Naive thymus-derived CD4-positive, alpha-beta T cell (primary cell): ENCODE measurements at regions of chr19 and their contacts with region 1.

Region 1: DNA sequence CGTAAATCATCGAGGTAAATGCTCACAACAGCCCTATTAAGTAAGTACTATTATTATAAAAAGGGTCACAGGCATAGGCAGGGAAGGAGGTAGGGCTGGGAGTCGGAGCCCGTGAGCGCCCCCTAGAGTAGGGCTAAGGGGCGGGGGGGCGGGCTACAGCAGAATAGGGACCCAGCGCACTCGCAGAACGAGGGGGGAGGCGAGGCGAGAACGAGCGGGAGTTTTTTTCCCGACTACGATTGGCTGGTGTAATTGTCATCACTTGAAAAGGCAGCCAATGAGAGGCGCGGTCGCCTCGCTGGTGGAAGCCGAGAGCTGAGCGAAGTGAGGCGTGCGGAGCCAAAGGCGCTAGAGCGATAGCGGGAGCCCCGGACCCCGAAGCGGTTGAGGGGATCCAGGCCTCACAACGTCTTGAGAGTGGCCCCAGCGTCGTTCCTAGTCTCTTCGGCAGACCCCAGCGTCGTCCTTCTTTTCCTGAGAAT is 24.2 kb downstream of the KEAP1 start:
- DNase-seq: peak; percentile 67 to 94 (median 90)
- ATAC-seq: peak; percentile 98
- H3K4me3 ChIP-seq: peak overlapping the region; percentile 58
- H3K4me3 Mint-ChIP-seq: peak overlapping the region in 9 of 10 donors; percentile 64 to 81 (median 72)
- H3K27ac ChIP-seq: peak overlapping the region; percentile 53
- H3K27ac Mint-ChIP-seq: peak overlapping the region in 8 of 9 donors; percentile 28 to 90 (median 83)
- H3K4me1 ChIP-seq: peaks cover 7 to 11% of the 10 kb centered on the region in 2 donors
- H3K4me1 Mint-ChIP-seq: peaks cover 7 to 32% (median 15%) of the 10 kb centered on the region in 7 donors
- H3K27me3 ChIP-seq: no peaks in the 10 kb centered on the region
- H3K27me3 Mint-ChIP-seq: no peaks in the 10 kb centered on the region

Region 2: DNA sequence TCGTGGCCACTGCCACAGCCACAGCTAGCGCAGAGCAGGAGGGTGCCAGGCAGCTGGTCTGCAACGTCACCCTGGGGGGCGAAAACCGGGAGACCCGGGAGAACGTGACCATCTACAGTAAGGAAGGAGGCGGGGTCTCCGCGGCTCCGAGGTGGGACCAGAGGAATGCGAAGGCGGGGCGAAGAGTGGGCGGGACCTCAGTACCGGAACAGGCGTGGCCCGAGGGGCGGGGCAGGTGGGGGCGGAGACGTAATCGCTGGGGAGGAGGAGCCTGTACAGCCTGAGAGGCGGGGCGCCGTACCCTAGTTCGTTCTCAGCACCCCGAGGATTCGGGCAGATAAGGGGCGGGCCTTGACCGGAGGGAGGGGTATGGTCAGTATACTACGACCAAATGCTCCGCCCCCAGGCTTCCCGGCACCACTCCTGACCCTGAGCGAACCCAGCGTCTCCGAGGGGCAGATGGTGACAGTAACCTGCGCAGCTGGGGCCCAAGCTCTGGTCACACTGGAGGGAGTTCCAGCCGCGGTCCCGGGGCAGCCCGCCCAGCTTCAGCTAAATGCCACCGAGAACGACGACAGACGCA is 186.6 kb before region 1 on chr19:
- CTCF ChIA-PET with region 1: no interaction called
- POLR2A ChIA-PET with region 1: no interaction called
- intact Hi-C with region 1: loop called in 1 of 2 experiments (anchors 5 kb)
- DNase-seq: peak in 8 of 9 donors; percentile 49 to 85 (median 54)
- ATAC-seq: peak; percentile 74
- H3K4me3 ChIP-seq: peak overlapping the region; percentile 54
- H3K4me3 Mint-ChIP-seq: peak overlapping the region; percentile 70 to 87 (median 80)
- H3K27ac ChIP-seq: no peak overlapping the region
- H3K27ac Mint-ChIP-seq: peak overlapping the region in 4 of 9 donors; percentile 34 to 88 (median 68)
- H3K4me1 ChIP-seq: peaks cover 62 to 66% of the 10 kb centered on the region in 2 donors
- H3K4me1 Mint-ChIP-seq: peaks cover 44 to 71% (median 60%) of the 10 kb centered on the region in 7 donors
- H3K27me3 ChIP-seq: peaks cover 8 to 55% of the 10 kb centered on the region in 2 donors
- H3K27me3 Mint-ChIP-seq: peaks cover 43 to 81% (median 52%) of the 10 kb centered on the region in 5 donors

Region 3: DNA sequence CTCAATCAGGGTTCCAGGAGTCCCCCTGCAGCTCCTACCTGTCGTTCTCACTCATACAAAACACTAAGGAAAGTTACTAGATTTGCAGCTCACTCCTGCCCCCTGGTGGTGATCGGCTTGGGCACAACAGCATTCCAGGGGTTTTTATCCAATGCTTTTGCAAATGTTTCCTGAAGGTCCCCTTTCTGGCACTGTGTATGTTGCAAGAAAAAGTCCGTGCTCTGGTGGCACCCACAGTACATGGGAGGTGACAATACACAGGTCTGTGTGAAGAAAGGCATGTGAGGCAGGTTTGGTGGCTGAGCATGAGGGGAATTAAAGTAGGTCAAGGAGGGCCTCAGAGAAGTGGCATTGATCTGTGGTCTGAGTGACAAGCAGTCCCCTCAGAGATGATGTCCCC is 90.0 kb before region 1 on chr19:
- CTCF ChIA-PET with region 1: no interaction called
- POLR2A ChIA-PET with region 1: no interaction called
- intact Hi-C with region 1: no loop called
- DNase-seq: peak; percentile 62 to 82 (median 74)
- ATAC-seq: peak; percentile 77
- H3K4me3 ChIP-seq: no peak overlapping the region
- H3K4me3 Mint-ChIP-seq: no peak overlapping the region
- H3K27ac ChIP-seq: no peak overlapping the region
- H3K27ac Mint-ChIP-seq: peak overlapping the region in 7 of 9 donors; percentile 7 to 56 (median 24)
- H3K4me1 ChIP-seq: no peaks in the 10 kb centered on the region
- H3K4me1 Mint-ChIP-seq: peaks cover 0 to 8% (median 4%) of the 10 kb centered on the region in 7 donors
- H3K27me3 ChIP-seq: no peaks in the 10 kb centered on the region
- H3K27me3 Mint-ChIP-seq: no peaks in the 10 kb centered on the region

Region 4: GRCh38 chr19:10431943-10432735 is 46.8 kb before region 1 on chr19:
- CTCF ChIA-PET with region 1: no interaction called
- POLR2A ChIA-PET with region 1: no interaction called
- intact Hi-C with region 1: loop called in 1 of 2 experiments (anchors 5 kb)
- DNase-seq: peak in 8 of 9 donors; percentile 44 to 64 (median 54)
- ATAC-seq: peak; percentile 58
- H3K4me3 ChIP-seq: peak overlapping the region; percentile 50
- H3K4me3 Mint-ChIP-seq: peak overlapping the region; percentile 82 to 94 (median 88)
- H3K27ac ChIP-seq: peak overlapping the region; percentile 46
- H3K27ac Mint-ChIP-seq: peak overlapping the region in 7 of 9 donors; percentile 26 to 95 (median 82)
- H3K4me1 ChIP-seq: peaks cover 19 to 33% of the 10 kb centered on the region in 2 donors
- H3K4me1 Mint-ChIP-seq: peaks cover 22 to 69% (median 33%) of the 10 kb centered on the region in 7 donors
- H3K27me3 ChIP-seq: peaks cover 0 to 9% of the 10 kb centered on the region in 2 donors
- H3K27me3 Mint-ChIP-seq: peaks cover 22 to 38% (median 31%) of the 10 kb centered on the region in 5 donors

Region 5: GRCh38 chr19:10461047-10461790 is 17.7 kb before region 1 on chr19:
- CTCF ChIA-PET with region 1: no interaction called
- POLR2A ChIA-PET with region 1: no interaction called
- intact Hi-C with region 1: no loop called
- DNase-seq: peak; percentile 67 to 95 (median 79)
- ATAC-seq: peak; percentile 94
- H3K4me3 ChIP-seq: peak overlapping the region; percentile 41
- H3K4me3 Mint-ChIP-seq: peak overlapping the region; percentile 20 to 79 (median 70)
- H3K27ac ChIP-seq: peak overlapping the region; percentile 31
- H3K27ac Mint-ChIP-seq: peak overlapping the region in 1 of 9 donors; percentile 41
- H3K4me1 ChIP-seq: peaks cover 3 to 5% of the 10 kb centered on the region in 2 donors
- H3K4me1 Mint-ChIP-seq: peaks cover 0 to 11% (median 6%) of the 10 kb centered on the region in 7 donors
- H3K27me3 ChIP-seq: no peaks in the 10 kb centered on the region
- H3K27me3 Mint-ChIP-seq: no peaks in the 10 kb centered on the region

Region 6: GRCh38 chr19:10491472-10492047 is 12.6 kb after region 1 on chr19:
- CTCF ChIA-PET with region 1: interaction called, 10 read pairs
- POLR2A ChIA-PET with region 1: no interaction called
- intact Hi-C with region 1: no loop called
- DNase-seq: no peak
- ATAC-seq: no peak
- H3K4me3 ChIP-seq: no peak overlapping the region
- H3K4me3 Mint-ChIP-seq: no peak overlapping the region
- H3K27ac ChIP-seq: no peak overlapping the region
- H3K27ac Mint-ChIP-seq: peak overlapping the region in 1 of 9 donors; percentile 43
- H3K4me1 ChIP-seq: no peaks in the 10 kb centered on the region
- H3K4me1 Mint-ChIP-seq: peaks cover 2 to 15% (median 7%) of the 10 kb centered on the region in 7 donors
- H3K27me3 ChIP-seq: no peaks in the 10 kb centered on the region
- H3K27me3 Mint-ChIP-seq: no peaks in the 10 kb centered on the region

Region 7: DNA sequence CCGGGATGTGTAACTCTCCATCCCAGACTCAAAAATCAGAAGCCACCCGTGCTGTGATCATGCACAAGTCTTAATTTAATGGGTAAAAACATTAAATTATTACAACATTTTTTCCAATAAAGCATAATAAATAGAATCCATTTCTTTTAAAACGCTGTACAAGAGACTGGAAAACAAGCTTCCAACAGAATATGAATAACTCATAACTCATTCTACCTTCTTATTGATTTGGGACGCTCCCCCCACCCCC is 87.4 kb after region 1 on chr19:
- CTCF ChIA-PET with region 1: no interaction called
- POLR2A ChIA-PET with region 1: no interaction called
- intact Hi-C with region 1: no loop called
- DNase-seq: no peak
- ATAC-seq: no peak
- H3K4me3 ChIP-seq: peak overlapping the region; percentile 84
- H3K4me3 Mint-ChIP-seq: peak overlapping the region; percentile 92 to 100 (median 97)
- H3K27ac ChIP-seq: peak overlapping the region; percentile 92
- H3K27ac Mint-ChIP-seq: peak overlapping the region; percentile 94 to 99 (median 96)
- H3K4me1 ChIP-seq: peaks cover 26 to 28% of the 10 kb centered on the region in 2 donors
- H3K4me1 Mint-ChIP-seq: peaks cover 28 to 54% (median 44%) of the 10 kb centered on the region in 7 donors
- H3K27me3 ChIP-seq: no peaks in the 10 kb centered on the region
- H3K27me3 Mint-ChIP-seq: peaks cover 0 to 5% (median 0%) of the 10 kb centered on the region in 5 donors

Region 8: GRCh38 chr19:10695401-10696398 is 216.8 kb after region 1 on chr19:
- CTCF ChIA-PET with region 1: interaction called, 3 read pairs
- POLR2A ChIA-PET with region 1: no interaction called
- intact Hi-C with region 1: loop called (anchors 2 to 10 kb)
- DNase-seq: peak; percentile 79 to 90 (median 85)
- ATAC-seq: peak; percentile 99
- H3K4me3 ChIP-seq: peak overlapping the region; percentile 36
- H3K4me3 Mint-ChIP-seq: peak overlapping the region; percentile 81 to 89 (median 86)
- H3K27ac ChIP-seq: no peak overlapping the region
- H3K27ac Mint-ChIP-seq: peak overlapping the region in 8 of 9 donors; percentile 9 to 88 (median 56)
- H3K4me1 ChIP-seq: peaks cover 4 to 10% of the 10 kb centered on the region in 2 donors
- H3K4me1 Mint-ChIP-seq: peaks cover 12 to 25% (median 21%) of the 10 kb centered on the region in 7 donors
- H3K27me3 ChIP-seq: no peaks in the 10 kb centered on the region
- H3K27me3 Mint-ChIP-seq: peaks cover 0 to 11% (median 0%) of the 10 kb centered on the region in 5 donors

Region 9: DNA sequence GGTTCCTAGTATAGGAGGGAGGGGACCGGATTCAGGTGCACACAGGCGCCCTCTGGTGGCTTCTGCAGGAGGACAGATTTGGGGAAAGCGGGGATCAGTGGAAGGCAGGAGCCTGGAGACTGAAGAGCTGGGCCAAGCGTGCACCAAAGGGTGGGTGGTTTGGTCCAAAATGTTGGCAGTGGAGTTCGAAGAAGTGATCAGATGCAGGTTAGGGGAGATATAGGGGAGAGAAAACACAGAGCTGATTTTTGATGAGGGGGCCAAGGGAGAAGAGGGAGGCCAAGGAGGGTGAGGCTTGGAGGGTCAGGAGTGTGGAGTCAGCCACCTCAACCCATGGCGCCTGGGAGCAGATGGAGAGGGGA is 385.6 kb after region 1 on chr19:
- CTCF ChIA-PET with region 1: no interaction called
- POLR2A ChIA-PET with region 1: no interaction called
- intact Hi-C with region 1: loop called in 1 of 2 experiments (anchors 5 kb)
- DNase-seq: peak; percentile 54 to 82 (median 70)
- ATAC-seq: peak; percentile 90
- H3K4me3 ChIP-seq: no peak overlapping the region
- H3K4me3 Mint-ChIP-seq: peak overlapping the region in 3 of 10 donors; percentile 3 to 53 (median 30)
- H3K27ac ChIP-seq: no peak overlapping the region
- H3K27ac Mint-ChIP-seq: peak overlapping the region in 8 of 9 donors; percentile 3 to 80 (median 42)
- H3K4me1 ChIP-seq: peaks cover 4 to 7% of the 10 kb centered on the region in 2 donors
- H3K4me1 Mint-ChIP-seq: peaks cover 11 to 28% (median 15%) of the 10 kb centered on the region in 7 donors
- H3K27me3 ChIP-seq: no peaks in the 10 kb centered on the region
- H3K27me3 Mint-ChIP-seq: no peaks in the 10 kb centered on the region